GM10248 (cell line): ENCODE measurements at regions of chr20 and their contacts with region 1.

Region 1: GRCh38 chr20:19903168-19903811 is 113.9 kb upstream of the NAA20 start:
- DNase-seq: peak; percentile 76
- CTCF ChIP-seq: peak; percentile 50

Region 2: DNA sequence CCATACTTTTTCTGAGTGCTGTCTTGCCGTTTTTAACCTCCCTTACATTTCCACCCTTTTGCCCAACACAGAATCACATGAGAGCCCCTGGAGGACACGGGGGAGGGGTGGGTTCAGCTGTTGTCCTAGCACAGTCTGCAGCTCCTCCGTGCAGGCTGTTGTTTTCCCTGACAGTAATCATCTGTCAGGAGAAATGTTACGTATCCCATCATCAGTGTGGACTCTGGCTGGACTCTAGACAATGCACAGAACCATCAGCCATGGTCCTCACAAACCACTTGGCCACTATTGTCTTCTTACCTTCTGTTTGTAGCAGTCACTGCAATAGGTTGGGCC is 53.1 kb before region 1 on chr20:
- CTCF ChIA-PET with region 1: no interaction called
- POLR2A ChIA-PET with region 1: no interaction called
- DNase-seq: no peak
- CTCF ChIP-seq: no peak

Region 3: GRCh38 chr20:19875331-19876221 is 27.7 kb before region 1 on chr20:
- CTCF ChIA-PET with region 1: no interaction called
- POLR2A ChIA-PET with region 1: no interaction called
- DNase-seq: no peak
- CTCF ChIP-seq: no peak

Region 4: GRCh38 chr20:19913927-19914614 is 10.8 kb after region 1 on chr20:
- CTCF ChIA-PET with region 1: interaction called, 13 read pairs
- POLR2A ChIA-PET with region 1: no interaction called
- DNase-seq: no peak
- CTCF ChIP-seq: no peak

Region 5: GRCh38 chr20:19974626-19975435 is 71.5 kb after region 1 on chr20:
- CTCF ChIA-PET with region 1: interaction called, 10 read pairs
- POLR2A ChIA-PET with region 1: no interaction called
- DNase-seq: no peak
- CTCF ChIP-seq: no peak